Heart left ventricle (tissue), 16 donors: ENCODE measurements at regions of chr3 and their contacts with region 1.

Region 1: GRCh38 chr3:29759411-29760225 is 478.7 kb downstream of the RBMS3 start:
- DNase-seq: peak in 2 of 5 donors; percentile 11 to 26
- ATAC-seq: peak; percentile 49 to 73 (median 58)
- H3K4me3 ChIP-seq: peak overlapping the region in 5 of 12 donors; percentile 1 to 14 (median 4)
- H3K27ac ChIP-seq: peak overlapping the region; percentile 25 to 84 (median 68)
- H3K4me1 ChIP-seq: peaks cover 0 to 77% (median 50%) of the 10 kb centered on the region in 12 donors
- H3K27me3 ChIP-seq: no peaks in the 10 kb centered on the region
- CTCF ChIP-seq: no peak
- POLR2A ChIP-seq: no peak

Region 2: DNA sequence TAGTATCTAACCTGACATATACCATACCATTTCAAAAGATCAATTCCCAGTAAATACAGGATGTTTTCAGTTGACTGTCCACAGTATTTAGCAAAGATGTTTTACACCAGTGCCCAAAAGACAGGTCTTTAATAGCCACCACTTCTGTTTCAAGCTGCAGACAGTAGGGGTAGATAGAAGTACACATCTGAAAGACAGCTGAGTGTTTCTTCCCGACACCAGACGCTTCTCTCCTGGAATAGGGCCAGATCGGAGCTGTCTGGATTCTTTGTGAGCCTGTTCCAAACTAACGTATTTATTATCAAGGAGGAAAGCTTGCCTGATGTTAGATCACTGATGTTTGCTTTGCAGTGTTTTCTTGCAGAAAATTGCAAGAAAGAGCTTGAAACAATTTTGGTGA is 614.8 kb before region 1 on chr3:
- intact Hi-C with region 1: loop called in 6 of 10 experiments (anchors 2 to 10 kb)
- DNase-seq: peak in 4 of 5 donors; percentile 35 to 56 (median 44)
- ATAC-seq: peak; percentile 66 to 81 (median 78)
- H3K4me3 ChIP-seq: no peak overlapping the region
- H3K27ac ChIP-seq: no peak overlapping the region
- H3K4me1 ChIP-seq: peaks cover 0 to 32% (median 6%) of the 10 kb centered on the region in 12 donors
- H3K27me3 ChIP-seq: no peaks in the 10 kb centered on the region
- CTCF ChIP-seq: peak in 10 of 12 donors; percentile 21 to 62 (median 50)
- POLR2A ChIP-seq: no peak

Region 3: DNA sequence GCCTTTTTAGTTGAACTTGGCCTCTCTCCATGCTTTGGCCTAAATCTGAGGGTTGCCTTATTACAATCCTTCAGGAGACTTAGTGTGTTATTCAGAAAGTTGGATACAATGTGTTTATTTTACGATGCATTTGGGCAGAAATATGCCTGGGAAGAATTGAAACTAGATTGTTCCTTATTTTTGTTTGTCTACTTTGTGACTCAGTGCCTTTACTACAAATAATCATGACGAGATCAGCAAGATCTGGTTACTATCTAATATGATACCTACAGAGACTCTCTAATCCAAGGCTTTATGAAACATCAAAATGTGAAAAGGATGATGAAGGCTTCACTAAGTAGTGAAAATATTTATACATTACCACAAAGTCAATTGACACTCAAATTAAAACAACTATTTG is 396.5 kb before region 1 on chr3:
- intact Hi-C with region 1: no loop called
- DNase-seq: no peak
- ATAC-seq: no peak
- H3K4me3 ChIP-seq: no peak overlapping the region
- H3K27ac ChIP-seq: no peak overlapping the region
- H3K4me1 ChIP-seq: peaks cover 0 to 27% (median 4%) of the 10 kb centered on the region in 12 donors
- H3K27me3 ChIP-seq: no peaks in the 10 kb centered on the region
- CTCF ChIP-seq: no peak
- POLR2A ChIP-seq: no peak

Region 4: GRCh38 chr3:29515451-29515850 is 244.2 kb before region 1 on chr3:
- intact Hi-C with region 1: loop called in 3 of 10 experiments (anchors 10 kb)
- DNase-seq: no peak
- ATAC-seq: peak in 2 of 4 donors; percentile 39 to 58
- H3K4me3 ChIP-seq: no peak overlapping the region
- H3K27ac ChIP-seq: no peak overlapping the region
- H3K4me1 ChIP-seq: peaks cover 10 to 70% (median 34%) of the 10 kb centered on the region in 12 donors
- H3K27me3 ChIP-seq: no peaks in the 10 kb centered on the region
- CTCF ChIP-seq: no peak
- POLR2A ChIP-seq: no peak

Region 5: GRCh38 chr3:29683018-29683993 is 76.3 kb before region 1 on chr3:
- intact Hi-C with region 1: loop called in 3 of 10 experiments (anchors 10 kb)
- DNase-seq: peak in 1 of 5 donors; percentile 15
- ATAC-seq: peak; percentile 69 to 83 (median 81)
- H3K4me3 ChIP-seq: peak overlapping the region in 3 of 12 donors; percentile 13 to 16 (median 15)
- H3K27ac ChIP-seq: peak overlapping the region; percentile 34 to 85 (median 73)
- H3K4me1 ChIP-seq: peaks cover 0 to 44% (median 28%) of the 10 kb centered on the region in 12 donors
- H3K27me3 ChIP-seq: no peaks in the 10 kb centered on the region
- CTCF ChIP-seq: no peak
- POLR2A ChIP-seq: no peak

Region 6: GRCh38 chr3:29718661-29719065 is 41.0 kb before region 1 on chr3:
- intact Hi-C with region 1: loop called in 2 of 10 experiments (anchors 5 kb)
- DNase-seq: no peak
- ATAC-seq: peak in 1 of 4 donors; percentile 18
- H3K4me3 ChIP-seq: no peak overlapping the region
- H3K27ac ChIP-seq: no peak overlapping the region
- H3K4me1 ChIP-seq: peaks cover 0 to 18% (median 0%) of the 10 kb centered on the region in 12 donors
- H3K27me3 ChIP-seq: no peaks in the 10 kb centered on the region
- CTCF ChIP-seq: no peak
- POLR2A ChIP-seq: no peak

Region 7: DNA sequence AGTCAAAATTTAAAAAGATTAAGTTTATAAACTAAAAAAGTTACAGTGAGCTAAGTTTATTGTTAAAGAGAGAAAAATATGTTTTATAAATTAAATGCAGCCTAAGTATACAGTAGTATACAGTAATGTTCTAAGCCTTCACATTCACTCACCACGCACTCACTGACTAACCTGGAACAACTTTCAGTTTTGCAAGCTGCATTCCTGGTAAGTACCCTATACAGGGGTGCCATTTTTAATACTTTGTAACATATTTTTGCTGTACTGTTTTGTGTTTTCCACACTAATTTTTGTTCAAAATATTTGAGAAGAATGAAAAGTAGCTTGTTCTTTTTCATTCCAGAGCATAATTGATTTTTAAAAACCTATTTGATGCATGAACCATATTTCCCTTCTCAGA is 46.1 kb after region 1 on chr3:
- intact Hi-C with region 1: no loop called
- DNase-seq: no peak
- ATAC-seq: no peak
- H3K4me3 ChIP-seq: no peak overlapping the region
- H3K27ac ChIP-seq: no peak overlapping the region
- H3K4me1 ChIP-seq: peaks cover 0 to 11% (median 0%) of the 10 kb centered on the region in 12 donors
- H3K27me3 ChIP-seq: no peaks in the 10 kb centered on the region
- CTCF ChIP-seq: no peak
- POLR2A ChIP-seq: no peak